ENCODE measurements at regions of chr13 and their contacts with region 1.

Region 1: GRCh38 chr13:51452361-51453206 is at the start of gene INTS6:
- DNase-seq: peak; percentile 100
- H3K4me3 ChIP-seq: peak within 1 kb of the TSS; percentile 85
- H3K27ac ChIP-seq: peak within 1 kb of the TSS; percentile 84
- H3K4me1 ChIP-seq: peaks cover 27% of the 10 kb centered on the region
- CTCF ChIP-seq: no peak
- total RNA-seq, gene INTS6: 37.0 and 45.6 TPM in 2 replicates

Region 2: GRCh38 chr13:51419001-51419636 is 33.5 kb before region 1 on chr13:
- CTCF ChIA-PET with region 1: interaction called, 5 read pairs
- POLR2A ChIA-PET with region 1: interaction called, 24 read pairs
- intact Hi-C with region 1: loop called (anchors 2 kb)
- DNase-seq: peak; percentile 67
- H3K4me3 ChIP-seq: peak overlapping the region; percentile 59
- H3K27ac ChIP-seq: peak overlapping the region; percentile 90
- H3K4me1 ChIP-seq: peaks cover 70% of the 10 kb centered on the region
- CTCF ChIP-seq: no peak

Region 3: GRCh38 chr13:51465124-51465523 is 12.5 kb after region 1 on chr13:
- CTCF ChIA-PET with region 1: no interaction called
- POLR2A ChIA-PET with region 1: interaction called, 17 read pairs
- intact Hi-C with region 1: no loop called
- DNase-seq: no peak
- H3K4me3 ChIP-seq: no peak overlapping the region
- H3K27ac ChIP-seq: no peak overlapping the region
- H3K4me1 ChIP-seq: no peaks in the 10 kb centered on the region
- CTCF ChIP-seq: no peak

Region 4: GRCh38 chr13:51525567-51526167 is 73.1 kb after region 1 on chr13:
- CTCF ChIA-PET with region 1: no interaction called
- POLR2A ChIA-PET with region 1: no interaction called
- intact Hi-C with region 1: no loop called
- DNase-seq: no peak
- H3K4me3 ChIP-seq: no peak overlapping the region
- H3K27ac ChIP-seq: no peak overlapping the region
- H3K4me1 ChIP-seq: no peaks in the 10 kb centered on the region
- CTCF ChIP-seq: no peak

Region 5: GRCh38 chr13:51797664-51798488 is 345.3 kb after region 1 on chr13:
- CTCF ChIA-PET with region 1: interaction called, 3 read pairs
- POLR2A ChIA-PET with region 1: interaction called, 17 read pairs
- intact Hi-C with region 1: loop called (anchors 2 kb)
- DNase-seq: peak; percentile 84
- H3K4me3 ChIP-seq: no peak overlapping the region
- H3K27ac ChIP-seq: no peak overlapping the region
- H3K4me1 ChIP-seq: peaks cover 88% of the 10 kb centered on the region
- CTCF ChIP-seq: peak; percentile 82

Region 6: GRCh38 chr13:51814825-51815650 is 362.5 kb after region 1 on chr13:
- CTCF ChIA-PET with region 1: no interaction called
- POLR2A ChIA-PET with region 1: interaction called, 11 read pairs
- intact Hi-C with region 1: no loop called
- DNase-seq: peak; percentile 90
- H3K4me3 ChIP-seq: peak overlapping the region; percentile 47
- H3K27ac ChIP-seq: peak overlapping the region; percentile 39
- H3K4me1 ChIP-seq: peaks cover 82% of the 10 kb centered on the region
- CTCF ChIP-seq: peak; percentile 96

Region 7: DNA sequence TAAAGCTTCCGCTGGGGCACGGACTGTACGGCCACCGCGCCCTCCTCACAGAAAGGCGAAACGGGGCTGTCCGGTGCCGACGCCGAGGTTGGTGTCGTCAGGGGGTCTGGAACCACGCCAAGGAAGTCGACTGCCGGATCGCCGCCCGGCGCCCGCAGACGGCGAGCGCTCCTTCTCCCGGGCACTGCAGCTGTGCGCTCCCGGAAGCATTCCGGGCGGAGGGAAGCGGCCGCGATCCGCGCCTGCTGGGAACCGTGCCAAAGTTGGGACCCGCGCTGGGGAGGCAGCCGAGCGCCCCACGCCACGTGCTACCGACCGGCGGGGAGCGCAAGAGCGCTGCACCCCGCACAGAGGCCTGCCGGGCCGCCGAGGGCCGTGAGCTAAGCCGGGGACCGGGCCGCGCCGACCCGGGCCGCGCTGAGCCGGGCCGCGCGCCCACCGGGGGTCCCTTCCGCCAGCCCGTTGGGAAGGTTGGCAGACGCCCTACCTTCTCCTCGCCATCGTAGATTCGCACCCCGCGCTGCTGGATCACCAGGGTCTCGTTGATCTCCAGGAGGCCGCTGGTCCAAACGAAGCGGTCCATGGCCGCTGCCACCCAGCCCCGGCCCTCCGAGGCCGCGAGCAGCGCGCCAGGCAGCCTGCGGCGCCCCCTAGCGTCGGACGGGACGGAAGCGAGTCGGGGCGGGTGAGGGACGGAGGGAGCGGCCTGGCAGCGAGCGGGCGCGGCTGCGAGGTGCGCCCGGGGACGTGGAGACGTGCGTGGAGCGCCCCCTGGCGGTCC is 997.6 kb after region 1 on chr13 and contains the start of gene VPS36:
- CTCF ChIA-PET with region 1: no interaction called
- POLR2A ChIA-PET with region 1: no interaction called
- intact Hi-C with region 1: loop called (anchors 5 kb)
- DNase-seq: peak; percentile 95
- H3K4me3 ChIP-seq: peak within 1 kb of the TSS; percentile 75
- H3K27ac ChIP-seq: peak within 1 kb of the TSS; percentile 34
- H3K4me1 ChIP-seq: peaks cover 28% of the 10 kb centered on the region
- CTCF ChIP-seq: peak; percentile 91
- total RNA-seq, gene VPS36: 26.5 and 35.9 TPM in 2 replicates

Measured in OCI-LY7 (cell line).